ENCODE measurements at regions of chr11 and their contacts with region 1.

Region 1: DNA sequence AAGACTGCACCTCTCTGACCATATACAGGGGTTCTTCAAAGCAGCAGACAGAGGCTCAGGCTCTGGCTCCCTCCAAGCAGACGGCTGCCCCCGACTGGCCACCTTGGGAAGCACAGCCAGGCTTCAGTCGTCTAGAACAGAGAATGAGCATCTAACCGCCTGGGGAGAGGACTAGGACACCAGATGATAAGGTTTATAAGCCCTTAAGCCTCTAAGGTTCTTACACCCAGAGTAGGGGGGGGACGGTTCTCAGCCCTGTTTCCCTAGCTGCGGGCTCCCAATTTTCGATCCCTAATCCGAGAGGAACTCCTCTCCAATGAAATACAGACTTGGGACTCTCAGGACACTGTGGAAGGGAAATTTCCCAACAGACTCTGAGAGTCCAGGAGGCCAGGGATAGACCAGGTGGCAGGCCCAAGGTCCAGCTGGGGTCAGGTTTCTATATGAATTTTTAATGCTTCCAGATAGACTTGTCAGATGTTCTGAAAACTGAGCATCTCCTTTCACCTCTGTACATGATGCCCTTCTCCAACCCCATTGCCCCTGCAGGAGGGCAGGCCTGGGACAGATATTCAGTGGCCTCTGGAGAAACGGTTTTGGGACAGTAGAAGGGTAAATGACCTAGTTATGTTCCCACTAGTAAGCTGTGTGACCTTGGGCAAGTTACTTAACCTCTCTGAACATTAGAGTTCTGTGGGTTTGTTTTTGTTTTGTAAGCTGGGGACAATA is 20.2 kb downstream of the RTN4RL2 start:
- DNase-seq: peak; percentile 81
- H3K4me3 Mint-ChIP-seq: no peak overlapping the region
- H3K27ac Mint-ChIP-seq: no peak overlapping the region
- H3K4me1 Mint-ChIP-seq: peaks cover 12% of the 10 kb centered on the region
- H3K27me3 Mint-ChIP-seq: peaks cover 55% of the 10 kb centered on the region

Region 2: GRCh38 chr11:57001674-57002401 is 478.7 kb before region 1 on chr11:
- CTCF ChIA-PET with region 1: no interaction called
- POLR2A ChIA-PET with region 1: no interaction called
- DNase-seq: no peak
- H3K4me3 Mint-ChIP-seq: no peak overlapping the region
- H3K27ac Mint-ChIP-seq: no peak overlapping the region
- H3K4me1 Mint-ChIP-seq: no peaks in the 10 kb centered on the region
- H3K27me3 Mint-ChIP-seq: no peaks in the 10 kb centered on the region

Region 3: GRCh38 chr11:57345555-57346211 is 134.9 kb before region 1 on chr11:
- CTCF ChIA-PET with region 1: interaction called, 14 read pairs
- POLR2A ChIA-PET with region 1: no interaction called
- DNase-seq: peak; percentile 67
- H3K4me3 Mint-ChIP-seq: no peak overlapping the region
- H3K27ac Mint-ChIP-seq: no peak overlapping the region
- H3K4me1 Mint-ChIP-seq: peaks cover 2% of the 10 kb centered on the region
- H3K27me3 Mint-ChIP-seq: peaks cover 5% of the 10 kb centered on the region

Region 4: DNA sequence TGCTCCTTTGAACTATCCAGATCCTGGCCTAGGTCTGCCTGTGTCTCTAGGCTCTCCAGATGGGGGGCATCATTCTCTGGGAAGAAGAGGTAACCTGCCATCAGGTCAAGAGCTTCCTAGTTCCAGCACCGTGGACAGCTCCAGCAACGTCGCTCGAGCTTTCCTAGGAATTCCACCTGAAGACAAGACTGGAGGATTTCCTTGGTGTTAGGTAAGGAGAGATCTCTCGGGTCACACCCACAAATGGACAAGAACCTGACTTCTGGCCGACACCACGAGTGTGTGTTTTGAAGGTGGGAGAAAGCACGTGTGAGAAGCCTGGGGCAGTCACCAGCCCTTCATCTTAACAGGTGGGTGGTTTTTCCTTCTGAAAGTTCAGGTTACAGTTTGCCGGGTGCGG is 100.8 kb before region 1 on chr11:
- CTCF ChIA-PET with region 1: no interaction called
- POLR2A ChIA-PET with region 1: no interaction called
- DNase-seq: no peak
- H3K4me3 Mint-ChIP-seq: no peak overlapping the region
- H3K27ac Mint-ChIP-seq: no peak overlapping the region
- H3K4me1 Mint-ChIP-seq: no peaks in the 10 kb centered on the region
- H3K27me3 Mint-ChIP-seq: peaks cover 5% of the 10 kb centered on the region

Measured in activated CD4-positive, alpha-beta memory T cell treated with anti-CD3 and anti-CD28 coated beads, Interleukin-2, amount 10 ng/mL, durations not matched to agents 7 days and 5 days (primary cell).